ENCODE measurements at regions of chr15 and their contacts with region 1.

Region 1: GRCh38 chr15:51162865-51163762 is 68.4 kb upstream of the TNFAIP8L3 start:
- DNase-seq: peak; percentile 72
- ATAC-seq: peak; percentile 96
- H3K4me3 ChIP-seq: peak overlapping the region; percentile 46
- H3K27ac ChIP-seq: no peak overlapping the region
- H3K4me1 ChIP-seq: no peaks in the 10 kb centered on the region
- H3K27me3 ChIP-seq: peaks cover 29% of the 10 kb centered on the region
- CTCF ChIP-seq: peak; percentile 96
- POLR2A ChIP-seq: no peak
- RAD21 ChIP-seq: peak; percentile 94

Region 2: DNA sequence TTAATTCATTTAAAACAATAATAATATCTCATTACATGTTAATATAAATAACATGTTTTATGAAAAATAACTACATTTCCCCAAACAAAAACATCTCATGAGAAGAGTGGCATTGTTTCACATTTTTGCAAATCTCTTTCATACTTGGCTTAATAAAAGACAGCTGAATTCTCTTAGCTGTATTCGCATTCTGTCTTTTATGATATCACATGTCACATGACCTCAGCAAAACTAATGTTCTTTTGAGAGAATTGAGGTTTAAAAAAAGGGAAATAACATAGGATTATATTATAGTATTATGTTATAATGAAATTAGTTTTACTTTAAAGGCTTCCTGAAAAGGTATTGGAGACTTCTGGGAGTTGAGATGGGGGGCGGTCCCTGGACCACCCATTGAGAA is 349.2 kb before region 1 on chr15:
- CTCF ChIA-PET with region 1: no interaction called
- POLR2A ChIA-PET with region 1: no interaction called
- dilution Hi-C with region 1: no loop called
- in situ Hi-C with region 1: no loop called
- intact Hi-C with region 1: no loop called
- DNase-seq: no peak
- ATAC-seq: no peak
- H3K4me3 ChIP-seq: no peak overlapping the region
- H3K27ac ChIP-seq: no peak overlapping the region
- H3K4me1 ChIP-seq: no peaks in the 10 kb centered on the region
- H3K27me3 ChIP-seq: peaks cover 9% of the 10 kb centered on the region
- CTCF ChIP-seq: no peak
- POLR2A ChIP-seq: no peak
- RAD21 ChIP-seq: no peak

Region 3: GRCh38 chr15:51024735-51025453 is 138.2 kb before region 1 on chr15:
- CTCF ChIA-PET with region 1: no interaction called
- POLR2A ChIA-PET with region 1: no interaction called
- dilution Hi-C with region 1: no loop called
- in situ Hi-C with region 1: no loop called
- intact Hi-C with region 1: no loop called
- DNase-seq: peak; percentile 14
- ATAC-seq: no peak
- H3K4me3 ChIP-seq: no peak overlapping the region
- H3K27ac ChIP-seq: no peak overlapping the region
- H3K4me1 ChIP-seq: peaks cover 2% of the 10 kb centered on the region; the same call in 1 of the 2 replicates
- H3K27me3 ChIP-seq: no peaks in the 10 kb centered on the region
- CTCF ChIP-seq: no peak
- POLR2A ChIP-seq: no peak
- RAD21 ChIP-seq: no peak

Region 4: GRCh38 chr15:51186181-51186705 is 23.1 kb after region 1 on chr15:
- CTCF ChIA-PET with region 1: interaction called, 46 read pairs
- POLR2A ChIA-PET with region 1: no interaction called
- dilution Hi-C with region 1: no loop called
- in situ Hi-C with region 1: no loop called
- intact Hi-C with region 1: no loop called
- DNase-seq: no peak
- ATAC-seq: no peak
- H3K4me3 ChIP-seq: no peak overlapping the region
- H3K27ac ChIP-seq: no peak overlapping the region
- H3K4me1 ChIP-seq: no peaks in the 10 kb centered on the region
- H3K27me3 ChIP-seq: peaks cover 58% of the 10 kb centered on the region
- CTCF ChIP-seq: no peak
- POLR2A ChIP-seq: no peak
- RAD21 ChIP-seq: no peak

Region 5: GRCh38 chr15:51227940-51228783 is 65.0 kb after region 1 on chr15:
- CTCF ChIA-PET with region 1: interaction called, 6 read pairs
- POLR2A ChIA-PET with region 1: no interaction called
- dilution Hi-C with region 1: no loop called
- in situ Hi-C with region 1: no loop called
- intact Hi-C with region 1: loop called (anchors 2 kb)
- DNase-seq: peak; percentile 89
- ATAC-seq: peak; percentile 80
- H3K4me3 ChIP-seq: no peak overlapping the region
- H3K27ac ChIP-seq: no peak overlapping the region
- H3K4me1 ChIP-seq: peaks cover 12% of the 10 kb centered on the region
- H3K27me3 ChIP-seq: no peaks in the 10 kb centered on the region
- CTCF ChIP-seq: no peak
- POLR2A ChIP-seq: no peak
- RAD21 ChIP-seq: no peak

Region 6: GRCh38 chr15:51380999-51381795 is 218.1 kb after region 1 on chr15:
- CTCF ChIA-PET with region 1: interaction called, 23 read pairs
- POLR2A ChIA-PET with region 1: no interaction called
- dilution Hi-C with region 1: no loop called
- in situ Hi-C with region 1: loop called (anchors 5 kb)
- intact Hi-C with region 1: loop called (anchors 1 kb)
- DNase-seq: peak; percentile 64
- ATAC-seq: peak; percentile 84
- H3K4me3 ChIP-seq: no peak overlapping the region
- H3K27ac ChIP-seq: no peak overlapping the region
- H3K4me1 ChIP-seq: peaks cover 8% of the 10 kb centered on the region
- H3K27me3 ChIP-seq: peaks cover 38% of the 10 kb centered on the region
- CTCF ChIP-seq: peak; percentile 97
- POLR2A ChIP-seq: no peak
- RAD21 ChIP-seq: peak; percentile 98

Region 7: GRCh38 chr15:51499379-51499976 is 336.4 kb after region 1 on chr15:
- CTCF ChIA-PET with region 1: interaction called, 5 read pairs
- POLR2A ChIA-PET with region 1: no interaction called
- dilution Hi-C with region 1: no loop called
- in situ Hi-C with region 1: no loop called
- intact Hi-C with region 1: loop called (anchors 1 kb)
- DNase-seq: peak; percentile 63
- ATAC-seq: peak; percentile 81
- H3K4me3 ChIP-seq: no peak overlapping the region
- H3K27ac ChIP-seq: no peak overlapping the region
- H3K4me1 ChIP-seq: peaks cover 4% of the 10 kb centered on the region
- H3K27me3 ChIP-seq: no peaks in the 10 kb centered on the region
- CTCF ChIP-seq: peak; percentile 66
- POLR2A ChIP-seq: no peak
- RAD21 ChIP-seq: peak; percentile 67

Measured in IMR-90 (cell line).